PC-3 (cell line): ENCODE measurements at regions of chr7 and their contacts with region 1.

Region 1: GRCh38 chr7:101815835-101816493 is 1.5 kb upstream of the CUX1 start:
- DNase-seq: peak; percentile 75
- ATAC-seq: peak; percentile 58
- H3K4me3 ChIP-seq: peak overlapping the region; percentile 61
- H3K27ac ChIP-seq: peak overlapping the region; percentile 41
- H3K4me1 ChIP-seq: peaks cover 28% of the 10 kb centered on the region
- H3K27me3 ChIP-seq: no peaks in the 10 kb centered on the region
- CTCF ChIP-seq: no peak

Region 2: DNA sequence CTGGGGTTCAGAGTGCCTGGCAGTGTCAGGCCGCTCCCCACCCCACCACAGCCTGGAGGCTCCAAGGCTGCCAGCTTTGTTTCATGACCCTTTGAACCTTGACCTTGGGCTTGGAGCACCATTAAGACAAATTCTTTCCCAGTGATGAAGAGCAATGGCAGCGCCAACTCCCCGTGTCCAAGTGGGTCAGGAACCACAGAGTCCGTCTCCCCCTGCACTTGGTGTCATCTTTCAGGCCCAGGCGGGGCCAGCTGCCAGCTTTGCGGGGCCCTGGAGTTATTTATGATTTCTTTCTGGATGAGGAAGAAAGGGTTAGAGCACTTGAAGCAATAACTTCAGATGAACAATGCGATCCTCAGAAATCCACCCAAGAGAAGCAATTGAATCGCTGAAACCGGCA is 297.6 kb before region 1 on chr7:
- CTCF ChIA-PET with region 1: no interaction called
- POLR2A ChIA-PET with region 1: interaction called, 17 read pairs
- intact Hi-C with region 1: no loop called
- DNase-seq: no peak
- ATAC-seq: no peak
- H3K4me3 ChIP-seq: no peak overlapping the region
- H3K27ac ChIP-seq: no peak overlapping the region
- H3K4me1 ChIP-seq: no peaks in the 10 kb centered on the region
- H3K27me3 ChIP-seq: no peaks in the 10 kb centered on the region
- CTCF ChIP-seq: no peak

Region 3: DNA sequence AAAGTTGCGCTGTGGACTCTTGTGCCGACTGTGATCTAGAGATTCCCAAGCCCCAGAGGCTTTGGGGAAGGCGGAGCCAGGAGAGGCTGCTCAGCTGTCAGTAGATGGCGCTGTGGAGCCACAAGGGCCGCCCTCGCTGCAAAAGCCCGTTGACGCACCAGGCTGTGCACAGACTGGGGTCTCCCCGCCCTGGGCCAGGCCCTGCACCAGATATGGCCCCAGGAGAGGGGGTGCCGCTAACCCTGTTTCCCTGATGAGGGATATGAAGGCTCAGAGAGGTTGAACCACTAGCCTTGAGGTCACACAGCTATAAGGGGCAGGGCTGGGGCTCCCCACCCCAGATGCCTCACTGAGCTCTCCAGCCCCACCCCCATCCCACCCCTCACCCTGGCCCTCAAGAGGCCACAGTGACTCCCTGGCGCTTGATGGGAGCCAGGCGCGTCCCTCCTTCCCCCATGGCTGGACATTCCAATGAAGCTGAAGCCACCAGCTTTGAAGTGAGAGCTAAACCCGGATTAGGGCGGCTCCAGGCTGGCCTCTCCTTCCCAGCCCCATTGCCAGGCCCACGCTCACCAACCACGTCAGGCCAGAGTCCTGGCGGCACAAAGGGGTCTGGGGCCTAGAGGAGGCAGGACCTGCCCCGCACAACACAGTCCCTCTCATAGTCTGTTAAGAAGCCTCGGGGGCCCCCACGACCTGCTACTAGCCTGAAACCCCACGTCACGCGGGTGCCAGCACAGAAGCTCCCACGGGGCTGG is 213.3 kb before region 1 on chr7:
- CTCF ChIA-PET with region 1: no interaction called
- POLR2A ChIA-PET with region 1: no interaction called
- intact Hi-C with region 1: loop called (anchors 1 kb)
- DNase-seq: peak; percentile 82
- ATAC-seq: peak; percentile 99
- H3K4me3 ChIP-seq: no peak overlapping the region
- H3K27ac ChIP-seq: no peak overlapping the region
- H3K4me1 ChIP-seq: no peaks in the 10 kb centered on the region
- H3K27me3 ChIP-seq: no peaks in the 10 kb centered on the region
- CTCF ChIP-seq: peak; percentile 90

Region 4: DNA sequence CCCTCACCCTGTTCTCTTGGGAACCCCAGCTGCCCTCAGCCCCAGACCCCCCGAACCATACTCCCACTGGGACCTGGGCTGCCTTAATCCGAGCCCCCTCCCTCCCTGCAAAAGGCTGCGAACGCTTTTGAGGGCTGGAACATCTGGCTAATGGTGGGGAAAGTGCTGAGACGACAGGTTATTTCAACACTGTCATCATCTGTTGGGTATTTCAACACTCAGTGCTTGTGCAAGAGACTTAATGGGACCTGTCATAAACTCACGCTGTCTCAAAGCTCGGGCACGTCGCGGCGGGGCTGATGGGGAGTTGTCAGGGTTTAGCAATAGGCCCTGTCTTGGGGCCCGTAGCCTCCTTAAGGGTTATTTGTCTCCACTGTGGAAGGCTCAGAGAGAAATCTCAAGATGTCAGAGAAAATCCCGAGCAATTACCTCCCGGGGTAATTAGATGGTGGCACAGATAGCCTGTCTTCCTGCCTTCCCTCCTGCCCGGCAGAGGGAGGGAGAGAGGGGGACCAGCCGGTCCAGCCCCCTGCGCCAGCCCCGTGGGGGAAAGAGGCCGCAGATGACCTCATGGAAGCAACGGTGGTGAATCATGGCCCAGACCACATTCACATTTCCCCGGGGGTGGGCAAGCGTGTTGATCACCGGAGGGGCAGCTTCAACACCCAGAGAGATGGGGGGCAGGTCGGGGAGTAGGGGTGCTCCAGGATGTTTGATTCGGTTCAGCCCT is 98.2 kb before region 1 on chr7:
- CTCF ChIA-PET with region 1: no interaction called
- POLR2A ChIA-PET with region 1: no interaction called
- intact Hi-C with region 1: no loop called
- DNase-seq: no peak
- ATAC-seq: no peak
- H3K4me3 ChIP-seq: no peak overlapping the region
- H3K27ac ChIP-seq: no peak overlapping the region
- H3K4me1 ChIP-seq: no peaks in the 10 kb centered on the region
- H3K27me3 ChIP-seq: no peaks in the 10 kb centered on the region
- CTCF ChIP-seq: no peak

Region 5: GRCh38 chr7:101743241-101743994 is 72.5 kb before region 1 on chr7:
- CTCF ChIA-PET with region 1: no interaction called
- POLR2A ChIA-PET with region 1: no interaction called
- intact Hi-C with region 1: loop called (anchors 1 kb)
- DNase-seq: peak; percentile 49
- ATAC-seq: peak; percentile 74
- H3K4me3 ChIP-seq: peak overlapping the region; percentile 69
- H3K27ac ChIP-seq: no peak overlapping the region
- H3K4me1 ChIP-seq: peaks cover 13% of the 10 kb centered on the region
- H3K27me3 ChIP-seq: no peaks in the 10 kb centered on the region
- CTCF ChIP-seq: peak; percentile 59

Region 6: GRCh38 chr7:101882595-101883564 is 66.9 kb after region 1 on chr7:
- CTCF ChIA-PET with region 1: no interaction called
- POLR2A ChIA-PET with region 1: interaction called, 8 read pairs
- intact Hi-C with region 1: loop called (anchors 2 kb)
- DNase-seq: peak; percentile 99
- ATAC-seq: peak; percentile 89
- H3K4me3 ChIP-seq: peak overlapping the region; percentile 40
- H3K27ac ChIP-seq: peak overlapping the region; percentile 99
- H3K4me1 ChIP-seq: peaks cover 53% of the 10 kb centered on the region
- H3K27me3 ChIP-seq: no peaks in the 10 kb centered on the region
- CTCF ChIP-seq: no peak

Region 7: GRCh38 chr7:102125127-102125561 is 309.2 kb after region 1 on chr7:
- CTCF ChIA-PET with region 1: no interaction called
- POLR2A ChIA-PET with region 1: no interaction called
- intact Hi-C with region 1: loop called (anchors 2 kb)
- DNase-seq: peak; percentile 91
- ATAC-seq: peak; percentile 99
- H3K4me3 ChIP-seq: no peak overlapping the region
- H3K27ac ChIP-seq: peak overlapping the region; percentile 79
- H3K4me1 ChIP-seq: peaks cover 28% of the 10 kb centered on the region
- H3K27me3 ChIP-seq: no peaks in the 10 kb centered on the region
- CTCF ChIP-seq: peak; percentile 57

Region 8: GRCh38 chr7:102152672-102153585 is 337.0 kb after region 1 on chr7:
- CTCF ChIA-PET with region 1: no interaction called
- POLR2A ChIA-PET with region 1: no interaction called
- intact Hi-C with region 1: no loop called
- DNase-seq: peak; percentile 34
- ATAC-seq: peak; percentile 91
- H3K4me3 ChIP-seq: no peak overlapping the region
- H3K27ac ChIP-seq: peak overlapping the region; percentile 46
- H3K4me1 ChIP-seq: peaks cover 13% of the 10 kb centered on the region
- H3K27me3 ChIP-seq: no peaks in the 10 kb centered on the region
- CTCF ChIP-seq: no peak